HCT116 (cell line): ENCODE measurements at regions of chr11 and their contacts with region 1.

Region 1: GRCh38 chr11:29272019-29272654 is 744.7 kb downstream of the KCNA4 start:
- DNase-seq: peak; percentile 38
- ATAC-seq: peak; percentile 95
- H3K4me3 ChIP-seq: no peak overlapping the region
- H3K27ac ChIP-seq: no peak overlapping the region
- H3K4me1 ChIP-seq: no peaks in the 10 kb centered on the region
- H3K27me3 ChIP-seq: no peaks in the 10 kb centered on the region
- CTCF ChIP-seq: peak; percentile 41 to 57 (median 46); a peak in 5 of 6 replicates
- POLR2A ChIP-seq: no peak
- RAD21 ChIP-seq: peak; percentile 62

Region 2: DNA sequence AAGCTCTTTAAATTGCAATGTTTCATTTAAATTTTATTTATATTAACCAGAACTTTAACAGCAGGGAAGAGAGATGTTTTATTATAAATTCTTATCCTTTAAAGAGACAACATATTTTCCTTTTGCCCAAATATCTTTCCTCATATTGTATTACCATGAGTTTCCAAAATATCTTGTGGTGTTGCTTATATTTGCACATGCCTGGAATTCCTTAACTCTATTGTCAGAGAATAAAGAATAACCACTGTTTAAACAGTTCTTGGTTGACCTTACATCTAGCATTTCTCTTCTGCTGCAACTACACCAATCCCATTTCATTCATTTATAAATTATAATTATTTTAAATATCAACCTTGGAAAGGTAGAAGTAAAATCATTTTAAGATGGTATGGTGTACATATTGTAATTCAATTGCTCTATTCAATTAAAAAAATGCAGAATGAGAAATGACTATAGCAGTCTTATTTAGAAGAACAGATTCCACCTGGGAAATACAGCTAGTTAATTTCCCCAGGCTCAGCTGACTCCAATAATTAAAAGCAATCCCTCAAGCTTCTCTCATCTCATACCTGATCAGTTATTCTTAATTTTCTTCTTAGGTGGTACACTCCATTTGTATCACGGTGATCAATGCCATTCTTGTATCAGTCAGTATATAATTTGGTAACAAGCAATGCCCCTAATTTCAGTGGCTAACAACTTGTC is 178.6 kb before region 1 on chr11:
- CTCF ChIA-PET with region 1: no interaction called
- POLR2A ChIA-PET with region 1: no interaction called
- RAD21 ChIA-PET with region 1: no interaction called
- intact Hi-C with region 1: no loop called
- DNase-seq: no peak
- ATAC-seq: no peak
- H3K4me3 ChIP-seq: no peak overlapping the region
- H3K27ac ChIP-seq: no peak overlapping the region
- H3K4me1 ChIP-seq: no peaks in the 10 kb centered on the region
- H3K27me3 ChIP-seq: no peaks in the 10 kb centered on the region
- CTCF ChIP-seq: no peak
- POLR2A ChIP-seq: no peak
- RAD21 ChIP-seq: no peak

Region 3: GRCh38 chr11:29260939-29261705 is 11.0 kb before region 1 on chr11:
- CTCF ChIA-PET with region 1: interaction called, 10 read pairs
- POLR2A ChIA-PET with region 1: interaction called, 3 read pairs
- RAD21 ChIA-PET with region 1: no interaction called
- intact Hi-C with region 1: no loop called
- DNase-seq: peak; percentile 76
- ATAC-seq: peak; percentile 100
- H3K4me3 ChIP-seq: no peak overlapping the region
- H3K27ac ChIP-seq: no peak overlapping the region
- H3K4me1 ChIP-seq: peaks cover 0 to 13% of the 10 kb centered on the region in 2 experiments; a peak in 2 of 4 replicates
- H3K27me3 ChIP-seq: no peaks in the 10 kb centered on the region
- CTCF ChIP-seq: peak; percentile 22 to 46 (median 36); a peak in 5 of 6 replicates
- POLR2A ChIP-seq: no peak
- RAD21 ChIP-seq: peak; percentile 55